CD4-positive, alpha-beta T cell (primary cell): ENCODE measurements at regions of chr2 and their contacts with region 1.

Region 1: GRCh38 chr2:30711646-30712085 is 95.6 kb downstream of the CAPN13 start:
- DNase-seq: peak; percentile 72 to 93 (median 81)
- ATAC-seq: peak; percentile 93
- H3K4me3 ChIP-seq: no peak overlapping the region
- H3K4me3 Mint-ChIP-seq: no peak overlapping the region
- H3K27ac ChIP-seq: no peak overlapping the region
- H3K27ac Mint-ChIP-seq: no peak overlapping the region
- H3K4me1 ChIP-seq: peaks cover 11% of the 10 kb centered on the region
- H3K4me1 Mint-ChIP-seq: peaks cover 6% of the 10 kb centered on the region
- H3K27me3 ChIP-seq: no peaks in the 10 kb centered on the region
- H3K27me3 Mint-ChIP-seq: peaks cover 5% of the 10 kb centered on the region
- CTCF ChIP-seq: peak; percentile 100

Region 2: DNA sequence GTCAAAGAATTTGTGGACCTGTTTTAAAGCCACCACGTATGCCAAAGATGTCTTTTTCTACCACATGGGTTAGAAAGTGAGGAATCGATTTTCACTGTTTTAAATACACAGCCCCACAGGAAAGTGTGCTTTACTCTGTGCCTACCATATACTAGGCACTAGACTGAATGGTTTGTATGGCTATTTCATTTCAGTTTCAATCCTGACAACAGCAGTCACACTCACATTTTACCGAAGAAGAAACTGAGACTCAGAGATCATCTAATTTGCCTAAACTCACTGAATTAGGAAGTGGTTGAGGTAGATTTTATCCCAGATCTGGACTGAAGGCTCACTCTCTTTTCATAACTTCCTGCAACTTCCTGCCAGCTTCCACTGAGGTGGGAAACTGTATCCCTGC is 966.7 kb before region 1 on chr2:
- CTCF ChIA-PET with region 1: no interaction called
- POLR2A ChIA-PET with region 1: no interaction called
- intact Hi-C with region 1: no loop called
- DNase-seq: no peak
- ATAC-seq: no peak
- H3K4me3 ChIP-seq: no peak overlapping the region
- H3K4me3 Mint-ChIP-seq: no peak overlapping the region
- H3K27ac ChIP-seq: no peak overlapping the region
- H3K27ac Mint-ChIP-seq: no peak overlapping the region
- H3K4me1 ChIP-seq: no peaks in the 10 kb centered on the region
- H3K4me1 Mint-ChIP-seq: no peaks in the 10 kb centered on the region
- H3K27me3 ChIP-seq: peaks cover 0 to 4% of the 10 kb centered on the region in 2 experiments
- H3K27me3 Mint-ChIP-seq: peaks cover 4% of the 10 kb centered on the region
- CTCF ChIP-seq: no peak

Region 3: GRCh38 chr2:29923110-29923721 is 788.5 kb before region 1 on chr2:
- CTCF ChIA-PET with region 1: interaction called, 3 read pairs
- POLR2A ChIA-PET with region 1: no interaction called
- intact Hi-C with region 1: loop called in 1 of 2 experiments (anchors 2 kb)
- DNase-seq: peak in 13 of 14 experiments; percentile 7 to 57 (median 22)
- ATAC-seq: no peak
- H3K4me3 ChIP-seq: no peak overlapping the region
- H3K4me3 Mint-ChIP-seq: peak overlapping the region; percentile 38
- H3K27ac ChIP-seq: no peak overlapping the region
- H3K27ac Mint-ChIP-seq: no peak overlapping the region
- H3K4me1 ChIP-seq: peaks cover 16% of the 10 kb centered on the region
- H3K4me1 Mint-ChIP-seq: peaks cover 14% of the 10 kb centered on the region
- H3K27me3 ChIP-seq: peaks cover 45 to 57% of the 10 kb centered on the region in 2 experiments
- H3K27me3 Mint-ChIP-seq: peaks cover 76% of the 10 kb centered on the region
- CTCF ChIP-seq: peak; percentile 91

Region 4: GRCh38 chr2:30208452-30208851 is 503.2 kb before region 1 on chr2:
- CTCF ChIA-PET with region 1: interaction called, 51 read pairs
- POLR2A ChIA-PET with region 1: interaction called, 15 read pairs
- intact Hi-C with region 1: loop called (anchors 1 kb)
- DNase-seq: peak in 10 of 14 experiments; percentile 16 to 74 (median 33)
- ATAC-seq: peak; percentile 58
- H3K4me3 ChIP-seq: no peak overlapping the region
- H3K4me3 Mint-ChIP-seq: peak overlapping the region; percentile 42
- H3K27ac ChIP-seq: peak overlapping the region in 1 of 2 donors; percentile 9
- H3K27ac Mint-ChIP-seq: peak overlapping the region; percentile 82
- H3K4me1 ChIP-seq: peaks cover 21% of the 10 kb centered on the region
- H3K4me1 Mint-ChIP-seq: peaks cover 31% of the 10 kb centered on the region
- H3K27me3 ChIP-seq: no peaks in the 10 kb centered on the region
- H3K27me3 Mint-ChIP-seq: no peaks in the 10 kb centered on the region
- CTCF ChIP-seq: peak; percentile 96

Region 5: DNA sequence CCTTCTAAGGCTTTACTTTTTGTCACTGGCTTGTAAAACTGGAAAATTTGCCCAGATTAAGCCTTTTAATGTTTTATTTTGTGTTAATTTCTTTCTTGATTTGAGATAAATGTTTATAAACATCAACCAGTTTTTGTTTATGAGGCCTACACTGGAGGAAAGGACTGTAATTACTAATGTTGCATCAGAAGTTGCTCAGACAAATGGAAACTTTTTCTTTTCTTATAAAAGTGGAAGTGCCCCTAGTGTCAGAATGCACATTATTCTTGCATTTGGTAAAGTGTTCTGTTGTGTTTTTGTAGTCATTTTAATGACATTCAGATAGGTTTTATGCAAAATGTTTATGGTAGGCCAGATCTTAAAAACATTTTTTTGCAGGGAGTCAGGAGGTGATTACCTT is 239.3 kb before region 1 on chr2:
- CTCF ChIA-PET with region 1: interaction called, 4 read pairs
- POLR2A ChIA-PET with region 1: no interaction called
- intact Hi-C with region 1: loop called (anchors 5 to 10 kb)
- DNase-seq: peak in 1 of 14 experiments; percentile 9
- ATAC-seq: no peak
- H3K4me3 ChIP-seq: no peak overlapping the region
- H3K4me3 Mint-ChIP-seq: no peak overlapping the region
- H3K27ac ChIP-seq: no peak overlapping the region
- H3K27ac Mint-ChIP-seq: no peak overlapping the region
- H3K4me1 ChIP-seq: no peaks in the 10 kb centered on the region
- H3K4me1 Mint-ChIP-seq: peaks cover 49% of the 10 kb centered on the region
- H3K27me3 ChIP-seq: no peaks in the 10 kb centered on the region
- H3K27me3 Mint-ChIP-seq: no peaks in the 10 kb centered on the region
- CTCF ChIP-seq: no peak

Region 6: DNA sequence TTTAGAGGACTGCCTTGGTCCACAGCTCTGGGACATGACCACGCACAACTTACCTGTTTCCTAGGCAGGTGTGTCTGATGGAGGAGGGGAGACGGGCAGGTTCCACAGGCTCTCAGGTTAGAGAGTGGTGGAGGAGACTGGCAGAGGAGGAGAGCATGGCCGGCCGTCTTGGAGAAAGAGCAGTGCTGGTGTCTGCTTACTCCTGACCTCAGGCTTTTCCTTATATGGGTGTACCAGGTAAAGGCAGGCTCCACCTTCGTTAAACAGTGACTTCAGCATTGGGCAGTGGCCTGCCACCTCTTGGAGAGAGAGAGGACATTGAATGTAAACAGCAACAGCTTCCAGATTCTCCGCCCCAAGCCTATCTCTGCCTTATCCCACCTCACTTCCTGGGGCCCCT is 95.6 kb after region 1 on chr2 and contains the start of gene CAPN13:
- CTCF ChIA-PET with region 1: no interaction called
- POLR2A ChIA-PET with region 1: no interaction called
- intact Hi-C with region 1: no loop called
- DNase-seq: no peak
- ATAC-seq: no peak
- H3K4me3 ChIP-seq: no peak within 1 kb of the TSS
- H3K4me3 Mint-ChIP-seq: no peak within 1 kb of the TSS
- H3K27ac ChIP-seq: no peak within 1 kb of the TSS
- H3K27ac Mint-ChIP-seq: no peak within 1 kb of the TSS
- H3K4me1 ChIP-seq: no peaks in the 10 kb centered on the region
- H3K4me1 Mint-ChIP-seq: no peaks in the 10 kb centered on the region
- H3K27me3 ChIP-seq: peaks cover 0 to 5% of the 10 kb centered on the region in 2 experiments
- H3K27me3 Mint-ChIP-seq: peaks cover 46% of the 10 kb centered on the region
- CTCF ChIP-seq: no peak
- total RNA-seq, gene CAPN13: not detected

Region 7: GRCh38 chr2:30862054-30862651 is 150.5 kb after region 1 on chr2:
- CTCF ChIA-PET with region 1: interaction called, 3 read pairs
- POLR2A ChIA-PET with region 1: no interaction called
- intact Hi-C with region 1: loop called (anchors 2 kb)
- DNase-seq: peak in 13 of 14 experiments; percentile 3 to 70 (median 29)
- ATAC-seq: no peak
- H3K4me3 ChIP-seq: no peak overlapping the region
- H3K4me3 Mint-ChIP-seq: no peak overlapping the region
- H3K27ac ChIP-seq: no peak overlapping the region
- H3K27ac Mint-ChIP-seq: no peak overlapping the region
- H3K4me1 ChIP-seq: peaks cover 3% of the 10 kb centered on the region
- H3K4me1 Mint-ChIP-seq: peaks cover 11% of the 10 kb centered on the region
- H3K27me3 ChIP-seq: peaks cover 0 to 1% of the 10 kb centered on the region in 2 experiments
- H3K27me3 Mint-ChIP-seq: peaks cover 4% of the 10 kb centered on the region
- CTCF ChIP-seq: peak; percentile 73

Region 8: DNA sequence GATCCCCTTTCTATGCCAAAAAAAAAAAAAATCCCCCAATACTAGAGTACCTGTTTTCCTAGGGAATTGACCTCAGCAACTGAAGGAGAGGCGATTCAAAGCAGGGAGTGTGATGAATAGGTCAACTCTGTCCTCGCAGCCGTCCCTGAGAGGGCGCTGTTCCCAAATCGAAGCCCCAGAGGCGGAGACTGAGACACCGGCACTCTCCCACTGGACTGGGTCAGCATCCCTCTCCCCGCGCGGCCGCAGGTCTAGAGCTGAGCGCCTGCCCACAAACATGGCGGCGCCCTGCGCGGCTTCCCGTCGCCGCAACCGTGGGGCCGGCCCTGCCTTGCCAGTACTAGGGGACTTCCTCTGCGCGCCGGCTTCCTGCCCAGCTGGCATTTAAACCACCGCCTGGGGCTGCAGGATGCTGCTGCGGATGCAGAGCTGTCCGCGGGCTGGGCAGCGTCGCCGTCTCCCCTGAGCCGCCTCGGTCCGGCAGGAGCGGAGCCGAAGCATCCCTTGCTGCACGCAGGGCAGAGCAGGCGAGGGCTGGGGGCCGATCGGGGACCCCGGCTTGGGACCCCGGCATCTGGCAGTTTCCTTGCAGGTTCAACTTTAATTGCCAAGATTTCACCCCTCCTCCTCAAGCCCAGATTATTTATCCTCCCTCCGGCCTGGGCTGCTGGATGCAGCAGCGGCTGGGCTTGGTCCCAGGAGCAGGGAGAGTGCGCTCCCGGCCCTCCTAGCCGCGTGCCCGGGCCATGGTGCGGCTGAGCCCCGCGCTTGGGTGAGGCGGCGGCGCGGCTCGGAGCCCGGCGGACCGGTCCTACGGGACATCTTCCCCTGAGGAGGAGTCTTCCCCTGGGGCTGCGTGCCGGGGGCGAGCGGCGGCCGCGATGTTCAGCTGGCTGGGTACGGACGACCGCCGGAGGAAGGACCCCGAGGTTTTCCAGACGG is 522.3 kb after region 1 on chr2 and contains the start of gene EHD3:
- CTCF ChIA-PET with region 1: interaction called, 4 read pairs
- POLR2A ChIA-PET with region 1: no interaction called
- intact Hi-C with region 1: loop called in 1 of 2 experiments (anchors 10 kb)
- DNase-seq: peak; percentile 51 to 85 (median 71)
- ATAC-seq: peak; percentile 97
- H3K4me3 ChIP-seq: peak within 1 kb of the TSS; percentile 73
- H3K4me3 Mint-ChIP-seq: peak within 1 kb of the TSS; percentile 86
- H3K27ac ChIP-seq: no peak within 1 kb of the TSS
- H3K27ac Mint-ChIP-seq: peak within 1 kb of the TSS; percentile 78
- H3K4me1 ChIP-seq: peaks cover 20% of the 10 kb centered on the region
- H3K4me1 Mint-ChIP-seq: peaks cover 31% of the 10 kb centered on the region
- H3K27me3 ChIP-seq: no peaks in the 10 kb centered on the region
- H3K27me3 Mint-ChIP-seq: peaks cover 9% of the 10 kb centered on the region
- CTCF ChIP-seq: no peak
- total RNA-seq, gene EHD3: 1.4 to 1.7 TPM

Region 9: DNA sequence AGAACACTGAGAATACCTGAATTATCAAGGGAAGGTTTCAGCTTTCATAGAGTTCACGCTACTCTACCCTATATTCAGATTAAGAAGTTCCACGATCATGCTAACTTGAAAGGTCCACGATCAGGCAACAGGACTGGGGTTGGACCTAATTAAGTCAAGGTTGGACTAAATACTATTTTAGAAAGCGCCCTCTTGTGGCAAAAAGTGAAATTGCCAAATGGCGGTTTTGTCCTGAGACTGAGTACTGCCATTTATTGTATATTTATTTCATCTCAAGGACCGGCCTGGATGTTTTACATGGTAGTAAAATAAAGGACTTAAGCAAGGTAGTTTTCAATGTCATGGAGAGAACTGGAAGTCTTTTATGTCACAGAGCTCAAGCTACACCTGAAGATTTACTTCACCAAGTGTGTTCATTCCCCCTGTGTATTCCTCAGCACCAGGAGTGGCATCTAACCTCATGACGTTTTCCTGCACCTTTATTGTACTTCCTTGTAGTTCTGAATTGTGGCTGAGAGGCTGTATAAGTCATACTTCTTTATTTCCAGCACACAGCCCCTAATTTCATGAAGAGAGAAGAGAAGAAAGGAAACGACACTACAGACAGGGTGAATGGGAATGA is 812.3 kb after region 1 on chr2:
- CTCF ChIA-PET with region 1: interaction called, 4 read pairs
- POLR2A ChIA-PET with region 1: no interaction called
- intact Hi-C with region 1: loop called (anchors 1 kb)
- DNase-seq: peak; percentile 3 to 58 (median 32)
- ATAC-seq: no peak
- H3K4me3 ChIP-seq: no peak overlapping the region
- H3K4me3 Mint-ChIP-seq: no peak overlapping the region
- H3K27ac ChIP-seq: no peak overlapping the region
- H3K27ac Mint-ChIP-seq: no peak overlapping the region
- H3K4me1 ChIP-seq: no peaks in the 10 kb centered on the region
- H3K4me1 Mint-ChIP-seq: no peaks in the 10 kb centered on the region
- H3K27me3 ChIP-seq: peaks cover 0 to 9% of the 10 kb centered on the region in 2 experiments
- H3K27me3 Mint-ChIP-seq: peaks cover 28% of the 10 kb centered on the region
- CTCF ChIP-seq: peak; percentile 88